CD4-positive, alpha-beta T cell (primary cell): ENCODE measurements at regions of chr16 and their contacts with region 1.

Region 1: GRCh38 chr16:86563489-86564345 is 2.9 kb upstream of the FOXC2 start:
- DNase-seq: peak; percentile 76 to 92 (median 84)
- ATAC-seq: peak; percentile 99
- H3K4me3 ChIP-seq: peak overlapping the region; percentile 11
- H3K4me3 Mint-ChIP-seq: peak overlapping the region; percentile 30
- H3K27ac ChIP-seq: no peak overlapping the region
- H3K27ac Mint-ChIP-seq: no peak overlapping the region
- H3K4me1 ChIP-seq: peaks cover 31% of the 10 kb centered on the region
- H3K4me1 Mint-ChIP-seq: peaks cover 26% of the 10 kb centered on the region
- H3K27me3 ChIP-seq: peaks cover 39 to 61% of the 10 kb centered on the region in 2 experiments
- H3K27me3 Mint-ChIP-seq: peaks cover 84% of the 10 kb centered on the region
- CTCF ChIP-seq: peak; percentile 100

Region 2: DNA sequence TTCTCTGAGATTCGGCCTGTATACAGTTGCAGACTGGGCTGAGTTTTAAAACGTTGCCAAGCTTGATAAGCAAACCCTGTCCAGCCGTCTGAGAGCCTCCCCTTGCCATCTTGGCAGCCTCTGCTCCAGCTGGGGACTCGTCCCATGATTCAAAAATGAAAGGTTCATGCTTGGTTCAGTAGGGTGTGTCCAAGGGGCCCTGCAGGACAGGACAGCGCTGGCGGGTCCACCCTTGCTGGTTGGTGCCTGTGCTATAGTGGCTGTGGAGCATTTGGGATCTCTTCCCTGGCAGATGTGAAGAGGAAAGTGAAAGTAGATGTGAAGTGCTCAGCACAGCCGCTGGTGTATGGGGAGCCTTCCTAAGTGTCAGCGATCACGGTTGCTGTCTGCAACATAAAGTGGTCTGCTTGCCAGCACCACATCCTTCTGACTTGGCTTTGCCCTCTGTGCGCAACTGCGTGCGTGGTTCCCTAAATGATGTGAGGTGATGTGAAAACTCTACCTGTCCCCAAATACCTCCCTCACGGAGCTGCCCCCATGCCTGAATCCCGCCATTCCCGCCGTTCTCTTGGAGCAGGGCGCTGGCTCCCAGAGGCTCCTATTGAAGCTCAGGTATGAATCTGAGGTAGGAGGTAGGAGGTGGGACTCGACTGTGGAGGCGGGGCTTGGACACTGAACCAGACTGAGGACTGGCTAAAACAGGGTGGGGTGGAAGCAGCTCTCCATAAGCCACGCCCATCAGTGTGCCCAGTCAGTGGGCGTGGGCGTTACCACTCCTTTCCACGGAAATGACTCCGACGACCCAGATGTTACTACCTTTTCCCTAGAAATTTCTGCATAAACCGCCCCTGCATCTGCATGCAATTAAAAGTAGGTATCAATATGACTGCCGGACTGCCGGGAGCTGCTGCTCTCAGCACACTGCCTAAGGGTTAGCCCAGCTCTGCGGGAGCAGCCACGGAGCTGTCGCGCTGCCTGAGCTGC is 55.4 kb after region 1 on chr16:
- CTCF ChIA-PET with region 1: no interaction called
- POLR2A ChIA-PET with region 1: no interaction called
- intact Hi-C with region 1: no loop called
- DNase-seq: no peak
- ATAC-seq: no peak
- H3K4me3 ChIP-seq: no peak overlapping the region
- H3K4me3 Mint-ChIP-seq: no peak overlapping the region
- H3K27ac ChIP-seq: no peak overlapping the region
- H3K27ac Mint-ChIP-seq: no peak overlapping the region
- H3K4me1 ChIP-seq: no peaks in the 10 kb centered on the region
- H3K4me1 Mint-ChIP-seq: no peaks in the 10 kb centered on the region
- H3K27me3 ChIP-seq: no peaks in the 10 kb centered on the region
- H3K27me3 Mint-ChIP-seq: peaks cover 5% of the 10 kb centered on the region
- CTCF ChIP-seq: no peak

Region 3: GRCh38 chr16:86874141-86874540 is 310.4 kb after region 1 on chr16:
- CTCF ChIA-PET with region 1: no interaction called
- POLR2A ChIA-PET with region 1: no interaction called
- intact Hi-C with region 1: loop called (anchors 5 kb)
- DNase-seq: peak in 1 of 14 experiments; percentile 11
- ATAC-seq: no peak
- H3K4me3 ChIP-seq: no peak overlapping the region
- H3K4me3 Mint-ChIP-seq: no peak overlapping the region
- H3K27ac ChIP-seq: no peak overlapping the region
- H3K27ac Mint-ChIP-seq: no peak overlapping the region
- H3K4me1 ChIP-seq: no peaks in the 10 kb centered on the region
- H3K4me1 Mint-ChIP-seq: no peaks in the 10 kb centered on the region
- H3K27me3 ChIP-seq: peaks cover 12 to 13% of the 10 kb centered on the region in 2 experiments
- H3K27me3 Mint-ChIP-seq: peaks cover 39% of the 10 kb centered on the region
- CTCF ChIP-seq: peak; percentile 10

Region 4: GRCh38 chr16:87062569-87063442 is 499.1 kb after region 1 on chr16:
- CTCF ChIA-PET with region 1: no interaction called
- POLR2A ChIA-PET with region 1: no interaction called
- intact Hi-C with region 1: loop called in 1 of 2 experiments (anchors 5 kb)
- DNase-seq: peak in 9 of 14 experiments; percentile 1 to 65 (median 32)
- ATAC-seq: no peak
- H3K4me3 ChIP-seq: no peak overlapping the region
- H3K4me3 Mint-ChIP-seq: no peak overlapping the region
- H3K27ac ChIP-seq: no peak overlapping the region
- H3K27ac Mint-ChIP-seq: no peak overlapping the region
- H3K4me1 ChIP-seq: no peaks in the 10 kb centered on the region
- H3K4me1 Mint-ChIP-seq: no peaks in the 10 kb centered on the region
- H3K27me3 ChIP-seq: peaks cover 16 to 40% of the 10 kb centered on the region in 2 experiments
- H3K27me3 Mint-ChIP-seq: peaks cover 67% of the 10 kb centered on the region
- CTCF ChIP-seq: no peak

Region 5: GRCh38 chr16:87278191-87279095 is 714.7 kb after region 1 on chr16:
- CTCF ChIA-PET with region 1: no interaction called
- POLR2A ChIA-PET with region 1: no interaction called
- intact Hi-C with region 1: loop called (anchors 1 to 5 kb)
- DNase-seq: peak in 7 of 14 experiments; percentile 5 to 42 (median 10)
- ATAC-seq: no peak
- H3K4me3 ChIP-seq: no peak overlapping the region
- H3K4me3 Mint-ChIP-seq: no peak overlapping the region
- H3K27ac ChIP-seq: no peak overlapping the region
- H3K27ac Mint-ChIP-seq: no peak overlapping the region
- H3K4me1 ChIP-seq: no peaks in the 10 kb centered on the region
- H3K4me1 Mint-ChIP-seq: no peaks in the 10 kb centered on the region
- H3K27me3 ChIP-seq: peaks cover 0 to 3% of the 10 kb centered on the region in 2 experiments
- H3K27me3 Mint-ChIP-seq: peaks cover 5% of the 10 kb centered on the region
- CTCF ChIP-seq: peak; percentile 30

Region 6: GRCh38 chr16:87297918-87298631 is 734.4 kb after region 1 on chr16:
- CTCF ChIA-PET with region 1: no interaction called
- POLR2A ChIA-PET with region 1: no interaction called
- intact Hi-C with region 1: loop called in 1 of 2 experiments (anchors 5 kb)
- DNase-seq: peak in 9 of 14 experiments; percentile 9 to 58 (median 27)
- ATAC-seq: no peak
- H3K4me3 ChIP-seq: no peak overlapping the region
- H3K4me3 Mint-ChIP-seq: no peak overlapping the region
- H3K27ac ChIP-seq: no peak overlapping the region
- H3K27ac Mint-ChIP-seq: no peak overlapping the region
- H3K4me1 ChIP-seq: peaks cover 3% of the 10 kb centered on the region
- H3K4me1 Mint-ChIP-seq: peaks cover 8% of the 10 kb centered on the region
- H3K27me3 ChIP-seq: no peaks in the 10 kb centered on the region
- H3K27me3 Mint-ChIP-seq: no peaks in the 10 kb centered on the region
- CTCF ChIP-seq: peak; percentile 59